ENCODE measurements at regions of chr11 and their contacts with region 1.

Region 1: GRCh38 chr11:62855571-62856332 is 16.4 kb upstream of the WDR74 start:
- DNase-seq: peak; percentile 99
- ATAC-seq: peak; percentile 92
- H3K4me3 ChIP-seq: peak overlapping the region; percentile 68 to 100 (median 99)
- H3K4me3 Mint-ChIP-seq: peak overlapping the region; percentile 99
- H3K27ac ChIP-seq: peak overlapping the region; percentile 65 to 84
- H3K27ac Mint-ChIP-seq: peak overlapping the region; percentile 98
- H3K4me1 ChIP-seq: peaks cover 39 to 58% of the 10 kb centered on the region in 2 donors
- H3K4me1 Mint-ChIP-seq: peaks cover 60% of the 10 kb centered on the region
- H3K27me3 ChIP-seq: no peaks in the 10 kb centered on the region
- H3K27me3 Mint-ChIP-seq: no peaks in the 10 kb centered on the region
- CTCF ChIP-seq: no peak

Region 2: DNA sequence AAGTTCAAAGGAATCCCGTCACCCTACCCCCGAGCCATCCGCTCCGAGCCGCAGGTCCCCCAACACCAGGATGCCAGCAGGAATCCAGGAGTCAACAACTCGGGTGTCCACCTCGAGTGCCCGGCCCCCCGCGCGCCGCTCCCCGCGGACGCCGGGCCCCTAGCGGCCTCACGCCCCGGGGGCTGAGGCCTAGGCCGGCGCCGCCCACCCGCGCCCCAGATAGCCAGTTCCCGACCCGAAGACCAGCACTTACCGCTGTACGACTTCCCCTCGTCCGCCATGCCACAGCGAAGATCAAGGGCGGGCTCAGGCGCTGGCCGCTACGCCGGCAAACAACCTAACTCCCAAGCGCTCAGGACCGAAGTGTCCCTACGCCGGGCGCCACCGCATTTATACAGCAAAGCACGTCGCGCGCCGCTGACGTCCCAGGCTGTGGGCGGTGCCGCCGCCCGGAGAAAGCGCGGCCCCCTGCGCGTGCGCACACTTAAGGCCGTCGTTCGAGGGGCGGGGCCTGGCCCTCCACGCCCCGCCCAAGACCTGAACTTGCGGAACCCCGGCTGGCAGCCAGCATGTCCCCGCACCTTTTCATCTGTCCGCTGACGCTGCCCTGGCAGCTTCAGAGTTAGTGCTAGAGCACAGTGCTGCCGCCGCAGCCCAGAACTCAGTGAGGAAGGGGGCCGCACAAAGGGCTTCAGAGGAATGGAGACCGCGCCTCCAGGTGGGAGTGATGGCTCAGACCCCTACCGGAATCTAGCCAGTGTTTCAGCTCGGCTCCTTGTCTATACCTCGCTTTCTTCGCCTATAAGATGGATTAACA is 50.5 kb before region 1 on chr11 and contains the start of gene NXF1:
- CTCF ChIA-PET with region 1: no interaction called
- POLR2A ChIA-PET with region 1: interaction called, 5 read pairs
- intact Hi-C with region 1: loop called (anchors 1 kb)
- DNase-seq: peak; percentile 98
- ATAC-seq: peak; percentile 87
- H3K4me3 ChIP-seq: peak within 1 kb of the TSS; percentile 77 to 96 (median 89)
- H3K4me3 Mint-ChIP-seq: peak within 1 kb of the TSS; percentile 100
- H3K27ac ChIP-seq: peak within 1 kb of the TSS; percentile 69 to 86
- H3K27ac Mint-ChIP-seq: peak within 1 kb of the TSS; percentile 99
- H3K4me1 ChIP-seq: peaks cover 11 to 25% of the 10 kb centered on the region in 2 donors
- H3K4me1 Mint-ChIP-seq: peaks cover 32% of the 10 kb centered on the region
- H3K27me3 ChIP-seq: no peaks in the 10 kb centered on the region
- H3K27me3 Mint-ChIP-seq: no peaks in the 10 kb centered on the region
- CTCF ChIP-seq: peak; percentile 22
- total RNA-seq, gene NXF1: 161 TPM in 2 replicates

Region 3: DNA sequence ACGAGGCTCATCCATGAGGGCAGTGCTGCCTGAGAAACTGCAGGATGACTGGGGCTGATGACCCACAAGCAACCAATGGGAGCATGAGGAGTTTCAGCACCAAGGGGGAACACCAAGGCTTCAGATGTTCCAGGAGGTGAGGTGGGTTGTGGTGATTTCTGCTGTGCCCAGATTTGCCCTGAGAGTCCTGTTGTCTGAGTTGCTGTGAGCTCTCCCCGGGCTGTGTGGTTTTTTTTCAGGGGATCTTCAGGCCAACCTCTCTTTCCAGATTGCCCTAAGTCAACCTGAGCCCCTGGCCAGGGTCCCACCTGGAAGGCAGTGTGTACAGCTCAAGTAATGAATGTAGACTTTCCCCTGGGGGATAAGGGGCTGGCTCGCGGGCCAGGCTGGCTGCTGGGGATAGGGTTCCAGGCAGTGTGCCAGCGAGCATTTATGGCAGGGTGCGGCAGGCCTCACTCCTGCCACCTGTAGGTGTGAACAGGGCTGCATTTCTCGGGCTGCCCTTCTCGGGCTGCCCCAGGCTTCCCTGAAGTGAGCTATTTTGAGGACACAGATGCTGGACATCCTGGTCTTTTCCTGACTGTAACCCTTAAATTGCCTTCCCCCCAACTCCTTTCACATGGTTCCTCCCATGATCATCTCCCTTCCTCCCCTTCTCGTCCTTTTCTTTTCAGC is 119.2 kb after region 1 on chr11:
- CTCF ChIA-PET with region 1: no interaction called
- POLR2A ChIA-PET with region 1: no interaction called
- intact Hi-C with region 1: no loop called
- DNase-seq: no peak
- ATAC-seq: no peak
- H3K4me3 ChIP-seq: no peak overlapping the region
- H3K4me3 Mint-ChIP-seq: no peak overlapping the region
- H3K27ac ChIP-seq: no peak overlapping the region
- H3K27ac Mint-ChIP-seq: no peak overlapping the region
- H3K4me1 ChIP-seq: no peaks in the 10 kb centered on the region
- H3K4me1 Mint-ChIP-seq: no peaks in the 10 kb centered on the region
- H3K27me3 ChIP-seq: peaks cover 0 to 3% (median 0%) of the 10 kb centered on the region in 4 experiments
- H3K27me3 Mint-ChIP-seq: peaks cover 24% of the 10 kb centered on the region
- CTCF ChIP-seq: peak; percentile 29